Left lung (tissue), 14 donors: ENCODE measurements at regions of chr12 and their contacts with region 1.

Region 1: GRCh38 chr12:106223485-106224354 is 24.1 kb downstream of the CKAP4 start:
- DNase-seq: peak; percentile 35 to 86 (median 70)
- ATAC-seq: peak; percentile 90
- H3K4me3 ChIP-seq: no peak overlapping the region
- H3K27ac ChIP-seq: no peak overlapping the region
- H3K4me1 ChIP-seq: peaks cover 0 to 14% of the 10 kb centered on the region in 2 donors
- H3K27me3 ChIP-seq: no peaks in the 10 kb centered on the region
- CTCF ChIP-seq: peak; percentile 88 to 91

Region 2: GRCh38 chr12:104535369-104535768 is 1688.4 kb before region 1 on chr12:
- intact Hi-C with region 1: no loop called
- DNase-seq: no peak
- ATAC-seq: no peak
- H3K4me3 ChIP-seq: no peak overlapping the region
- H3K27ac ChIP-seq: no peak overlapping the region
- H3K4me1 ChIP-seq: peaks cover 0 to 23% of the 10 kb centered on the region in 2 donors
- H3K27me3 ChIP-seq: no peaks in the 10 kb centered on the region
- CTCF ChIP-seq: no peak

Region 3: GRCh38 chr12:105420659-105421240 is 803.0 kb before region 1 on chr12:
- intact Hi-C with region 1: loop called in 1 of 2 experiments (anchors 5 kb)
- DNase-seq: peak in 3 of 4 donors; percentile 50 to 80 (median 51)
- ATAC-seq: peak; percentile 94
- H3K4me3 ChIP-seq: no peak overlapping the region
- H3K27ac ChIP-seq: no peak overlapping the region
- H3K4me1 ChIP-seq: no peaks in the 10 kb centered on the region
- H3K27me3 ChIP-seq: no peaks in the 10 kb centered on the region
- CTCF ChIP-seq: peak; percentile 84 to 89

Region 4: DNA sequence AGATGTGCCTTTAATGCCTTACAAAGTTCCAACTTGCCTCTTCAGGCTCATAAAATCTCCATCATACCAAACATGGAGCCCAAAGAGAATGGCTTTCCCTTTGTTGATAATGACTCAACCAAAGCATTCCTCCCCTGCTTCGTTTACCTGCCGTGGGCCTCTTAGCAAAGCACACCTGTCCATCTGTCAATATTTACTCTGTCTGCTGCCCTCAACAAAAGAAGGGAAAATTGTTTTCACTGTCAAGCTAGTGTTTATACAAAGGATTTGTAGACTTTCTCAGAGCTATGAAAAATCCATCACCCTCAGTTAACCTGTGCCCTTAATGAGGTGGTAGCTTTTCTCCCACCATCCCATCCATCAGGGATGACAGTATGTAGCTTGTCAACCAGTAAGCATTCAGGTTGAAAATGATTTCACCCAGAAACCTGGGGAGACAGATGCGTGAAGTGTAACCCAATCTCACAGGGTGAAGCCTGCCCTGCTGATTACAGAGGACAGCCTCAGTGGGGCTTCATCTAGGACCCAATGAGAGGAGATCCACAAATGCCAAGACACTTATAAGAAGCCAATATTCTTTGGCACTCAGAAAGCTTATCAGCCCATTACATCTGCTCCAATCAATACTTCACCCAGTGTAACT is 363.0 kb before region 1 on chr12:
- intact Hi-C with region 1: no loop called
- DNase-seq: no peak
- ATAC-seq: no peak
- H3K4me3 ChIP-seq: no peak overlapping the region
- H3K27ac ChIP-seq: no peak overlapping the region
- H3K4me1 ChIP-seq: no peaks in the 10 kb centered on the region
- H3K27me3 ChIP-seq: no peaks in the 10 kb centered on the region
- CTCF ChIP-seq: no peak

Region 5: GRCh38 chr12:106149096-106149784 is 74.5 kb before region 1 on chr12:
- intact Hi-C with region 1: no loop called
- DNase-seq: peak in 1 of 4 donors; percentile 36
- ATAC-seq: peak; percentile 73
- H3K4me3 ChIP-seq: no peak overlapping the region
- H3K27ac ChIP-seq: no peak overlapping the region
- H3K4me1 ChIP-seq: no peaks in the 10 kb centered on the region
- H3K27me3 ChIP-seq: no peaks in the 10 kb centered on the region
- CTCF ChIP-seq: peak; percentile 29 to 54

Region 6: GRCh38 chr12:106189341-106189740 is 34.4 kb before region 1 on chr12:
- intact Hi-C with region 1: no loop called
- DNase-seq: no peak
- ATAC-seq: no peak
- H3K4me3 ChIP-seq: no peak overlapping the region
- H3K27ac ChIP-seq: no peak overlapping the region
- H3K4me1 ChIP-seq: no peaks in the 10 kb centered on the region
- H3K27me3 ChIP-seq: peaks cover 0 to 25% of the 10 kb centered on the region in 2 donors
- CTCF ChIP-seq: no peak

Region 7: DNA sequence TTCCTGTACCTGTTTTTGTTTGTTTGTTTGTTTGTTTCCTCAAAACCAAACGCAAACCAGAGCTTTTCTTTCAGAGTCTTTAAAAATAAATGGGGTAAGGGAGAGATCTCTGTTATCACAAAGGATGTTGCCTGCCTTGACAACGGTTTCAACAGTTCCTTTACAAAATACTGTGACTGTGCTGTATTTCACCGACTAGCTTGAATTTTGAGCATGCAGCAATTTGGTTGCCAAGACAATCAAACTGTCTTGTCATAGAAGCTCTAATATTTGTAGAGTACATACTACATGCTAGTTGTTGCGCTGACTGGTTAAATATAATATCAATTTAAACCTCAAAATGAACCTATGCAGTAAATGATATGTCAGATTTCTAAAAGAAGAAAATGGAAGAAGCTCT is 56.4 kb after region 1 on chr12:
- intact Hi-C with region 1: loop called in 1 of 2 experiments (anchors 2 kb)
- DNase-seq: no peak
- ATAC-seq: no peak
- H3K4me3 ChIP-seq: no peak overlapping the region
- H3K27ac ChIP-seq: peak overlapping the region in 1 of 2 donors; percentile 82
- H3K4me1 ChIP-seq: peaks cover 0 to 20% of the 10 kb centered on the region in 2 donors
- H3K27me3 ChIP-seq: no peaks in the 10 kb centered on the region
- CTCF ChIP-seq: no peak

Region 8: DNA sequence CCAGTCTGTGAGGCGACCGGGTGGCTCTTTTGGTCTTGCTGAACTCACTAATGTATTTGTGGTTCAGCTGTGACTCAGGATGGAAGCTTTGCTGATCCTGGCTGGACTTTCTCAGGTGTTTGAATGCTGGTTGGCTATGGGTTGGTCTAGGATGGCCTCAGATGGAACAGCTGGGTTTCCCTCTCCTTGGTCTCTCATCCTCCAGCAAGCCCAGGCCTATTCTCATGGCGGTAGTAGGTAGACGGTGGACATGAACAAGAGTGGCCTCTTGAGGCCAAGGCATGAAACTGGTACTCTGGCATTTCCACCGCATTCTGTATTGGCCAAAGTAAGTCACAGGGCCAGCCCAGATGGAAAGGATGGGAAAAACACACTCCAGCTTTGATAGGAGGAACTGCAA is 122.0 kb after region 1 on chr12:
- intact Hi-C with region 1: loop called in 1 of 2 experiments (anchors 5 kb)
- DNase-seq: peak in 1 of 4 donors; percentile 56
- ATAC-seq: peak; percentile 69
- H3K4me3 ChIP-seq: no peak overlapping the region
- H3K27ac ChIP-seq: peak overlapping the region in 1 of 2 donors; percentile 25
- H3K4me1 ChIP-seq: peaks cover 7 to 19% of the 10 kb centered on the region in 2 donors
- H3K27me3 ChIP-seq: no peaks in the 10 kb centered on the region
- CTCF ChIP-seq: peak; percentile 22 to 35